ENCODE measurements at regions of chr11 and their contacts with region 1.

Region 1: GRCh38 chr11:37525336-37525735 is 927.3 kb upstream of the RAG2 start:
- DNase-seq: peak; percentile 38
- ATAC-seq: peak; percentile 67; the same call in 1 of the 2 replicates
- H3K4me3 ChIP-seq: no peak overlapping the region
- H3K27ac ChIP-seq: no peak overlapping the region
- H3K4me1 ChIP-seq: no peaks in the 10 kb centered on the region
- H3K27me3 ChIP-seq: no peaks in the 10 kb centered on the region
- CTCF ChIP-seq: peak; percentile 52
- POLR2A ChIP-seq: no peak
- RAD21 ChIP-seq: peak; percentile 48

Region 2: DNA sequence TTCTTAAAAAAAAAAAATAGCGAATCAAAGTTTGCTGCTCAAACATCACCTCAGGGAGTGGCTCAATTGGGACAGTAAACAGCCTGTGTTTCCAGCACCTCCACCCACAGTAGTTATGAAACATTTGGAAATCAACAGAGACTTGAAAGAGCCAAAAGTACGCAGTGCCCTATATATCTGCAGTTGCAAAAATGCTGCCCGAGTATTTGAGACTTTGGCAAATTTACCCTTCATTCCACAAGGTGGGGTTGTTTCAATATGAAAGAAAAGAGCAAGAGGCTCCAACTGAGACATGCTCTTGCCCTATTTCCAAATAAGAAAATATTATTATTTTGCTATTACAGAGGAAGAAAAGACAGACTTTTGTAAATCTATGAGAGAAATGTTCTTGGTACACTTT is 76.2 kb before region 1 on chr11:
- CTCF ChIA-PET with region 1: no interaction called
- POLR2A ChIA-PET with region 1: no interaction called
- dilution Hi-C with region 1: no loop called
- in situ Hi-C with region 1: loop called (anchors 10 kb)
- intact Hi-C with region 1: loop called (anchors 1 kb)
- DNase-seq: peak; percentile 68
- ATAC-seq: peak; percentile 84
- H3K4me3 ChIP-seq: no peak overlapping the region
- H3K27ac ChIP-seq: no peak overlapping the region
- H3K4me1 ChIP-seq: 0 out of 2 replicates have a peak, but pooled peaks cover 3% of the 10 kb centered on the region
- H3K27me3 ChIP-seq: no peaks in the 10 kb centered on the region
- CTCF ChIP-seq: peak; percentile 74
- POLR2A ChIP-seq: no peak
- RAD21 ChIP-seq: peak; percentile 80

Region 3: DNA sequence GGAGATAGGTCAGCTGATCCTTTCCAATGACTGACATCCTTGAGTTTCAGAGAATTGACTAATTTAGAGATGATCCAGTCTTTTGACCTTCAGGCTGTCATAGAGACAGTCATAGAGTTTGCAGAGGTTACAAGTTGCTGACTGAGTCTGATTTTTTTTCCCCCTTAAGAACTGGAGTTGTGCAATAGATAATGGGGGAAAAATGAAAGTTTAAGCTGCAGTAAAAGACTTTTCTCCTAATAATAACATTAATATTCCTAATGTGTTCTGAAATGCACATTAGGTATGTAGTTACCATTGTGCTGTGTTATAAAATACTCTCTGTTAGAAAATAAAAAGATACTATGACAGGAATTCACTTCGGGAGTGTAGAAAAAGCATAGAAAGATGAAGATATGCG is 50.4 kb before region 1 on chr11:
- CTCF ChIA-PET with region 1: no interaction called
- POLR2A ChIA-PET with region 1: no interaction called
- dilution Hi-C with region 1: no loop called
- in situ Hi-C with region 1: no loop called
- intact Hi-C with region 1: no loop called
- DNase-seq: no peak
- ATAC-seq: peak; percentile 14; the same call in 1 of the 2 replicates
- H3K4me3 ChIP-seq: no peak overlapping the region
- H3K27ac ChIP-seq: no peak overlapping the region
- H3K4me1 ChIP-seq: no peaks in the 10 kb centered on the region
- H3K27me3 ChIP-seq: no peaks in the 10 kb centered on the region
- CTCF ChIP-seq: no peak
- POLR2A ChIP-seq: no peak
- RAD21 ChIP-seq: no peak

Measured in IMR-90 (cell line).